PC-9 (cell line): ENCODE measurements at regions of chr2 and their contacts with region 1.

Region 1: GRCh38 chr2:213238753-213239495 is 45.3 kb upstream of the SPAG16 start:
- DNase-seq: peak; percentile 56 to 92
- H3K4me3 ChIP-seq: peak overlapping the region; percentile 24; the same call in 1 of the 2 replicates
- H3K27ac ChIP-seq: peak overlapping the region; percentile 90
- H3K4me1 ChIP-seq: peaks cover 30% of the 10 kb centered on the region
- H3K27me3 ChIP-seq: no peaks in the 10 kb centered on the region
- CTCF ChIP-seq: no peak

Region 2: GRCh38 chr2:212686285-212686895 is 552.5 kb before region 1 on chr2:
- CTCF ChIA-PET with region 1: no interaction called
- POLR2A ChIA-PET with region 1: no interaction called
- intact Hi-C with region 1: loop called (anchors 5 kb)
- DNase-seq: peak; percentile 35 to 41
- H3K4me3 ChIP-seq: no peak overlapping the region
- H3K27ac ChIP-seq: no peak overlapping the region
- H3K4me1 ChIP-seq: 0 out of 2 replicates have a peak, but pooled peaks cover 6% of the 10 kb centered on the region
- H3K27me3 ChIP-seq: no peaks in the 10 kb centered on the region
- CTCF ChIP-seq: peak; percentile 85

Region 3: DNA sequence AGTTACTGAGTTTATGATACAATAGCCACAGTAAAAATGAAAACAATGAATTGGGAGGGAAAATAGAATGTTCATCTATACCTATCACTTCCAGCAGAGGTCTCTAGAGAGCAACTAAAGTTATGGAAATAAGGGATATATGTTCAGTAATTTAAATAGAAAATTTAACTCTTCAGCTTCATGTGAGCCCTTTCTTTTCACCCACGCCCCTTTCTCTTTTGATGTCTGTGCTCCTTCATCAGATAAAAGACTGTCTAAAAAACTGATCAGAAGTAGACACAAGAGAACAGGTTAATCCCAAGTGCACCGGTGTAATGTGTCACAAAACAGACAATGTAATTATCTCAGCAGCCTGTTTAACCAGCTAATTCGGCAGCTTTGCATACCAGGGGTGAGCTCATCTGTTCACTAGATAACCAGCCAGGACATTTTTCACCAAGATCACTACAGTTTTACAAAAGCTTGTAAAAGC is 461.9 kb before region 1 on chr2:
- CTCF ChIA-PET with region 1: no interaction called
- POLR2A ChIA-PET with region 1: no interaction called
- intact Hi-C with region 1: loop called (anchors 2 kb)
- DNase-seq: peak; percentile 15 to 52
- H3K4me3 ChIP-seq: no peak overlapping the region
- H3K27ac ChIP-seq: no peak overlapping the region
- H3K4me1 ChIP-seq: no peaks in the 10 kb centered on the region; the same call in 1 of the 2 replicates
- H3K27me3 ChIP-seq: no peaks in the 10 kb centered on the region
- CTCF ChIP-seq: peak; percentile 73

Region 4: GRCh38 chr2:212863185-212863588 is 375.7 kb before region 1 on chr2:
- CTCF ChIA-PET with region 1: no interaction called
- POLR2A ChIA-PET with region 1: no interaction called
- intact Hi-C with region 1: loop called (anchors 5 kb)
- DNase-seq: peak; percentile 32 to 48
- H3K4me3 ChIP-seq: no peak overlapping the region
- H3K27ac ChIP-seq: no peak overlapping the region
- H3K4me1 ChIP-seq: no peaks in the 10 kb centered on the region
- H3K27me3 ChIP-seq: no peaks in the 10 kb centered on the region
- CTCF ChIP-seq: peak; percentile 69

Region 5: DNA sequence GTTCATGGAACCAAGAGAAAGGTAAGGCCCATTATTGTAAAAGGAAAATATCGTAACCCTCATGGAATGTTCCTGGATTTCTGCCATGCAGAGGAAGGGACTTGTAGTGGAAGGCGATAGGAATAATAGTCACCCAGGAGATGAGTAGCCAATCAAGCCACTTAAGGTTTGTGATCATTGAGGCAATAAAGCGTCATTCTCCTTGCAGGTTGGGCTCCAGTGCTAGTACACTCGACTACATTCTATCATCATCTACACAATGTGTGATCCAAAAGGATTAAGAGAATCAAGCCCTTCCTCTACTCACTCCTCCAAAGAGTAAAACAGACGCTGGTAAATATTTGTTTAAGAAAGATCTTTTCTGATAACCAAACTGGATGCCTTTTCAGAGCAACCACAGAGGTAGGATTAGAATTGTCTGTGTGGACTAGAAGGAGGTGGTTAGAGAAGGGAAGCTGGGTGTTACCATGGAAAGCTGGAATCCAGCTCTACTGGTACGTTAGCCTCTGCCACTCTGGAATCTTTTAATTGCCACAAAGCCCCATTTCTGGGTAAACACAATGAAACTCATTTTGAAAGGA is 333.2 kb before region 1 on chr2:
- CTCF ChIA-PET with region 1: no interaction called
- POLR2A ChIA-PET with region 1: no interaction called
- intact Hi-C with region 1: loop called (anchors 1 kb)
- DNase-seq: peak; percentile 54 to 96
- H3K4me3 ChIP-seq: peak overlapping the region; percentile 44; the same call in 1 of the 2 replicates
- H3K27ac ChIP-seq: peak overlapping the region; percentile 99
- H3K4me1 ChIP-seq: peaks cover 71% of the 10 kb centered on the region
- H3K27me3 ChIP-seq: no peaks in the 10 kb centered on the region
- CTCF ChIP-seq: no peak

Region 6: DNA sequence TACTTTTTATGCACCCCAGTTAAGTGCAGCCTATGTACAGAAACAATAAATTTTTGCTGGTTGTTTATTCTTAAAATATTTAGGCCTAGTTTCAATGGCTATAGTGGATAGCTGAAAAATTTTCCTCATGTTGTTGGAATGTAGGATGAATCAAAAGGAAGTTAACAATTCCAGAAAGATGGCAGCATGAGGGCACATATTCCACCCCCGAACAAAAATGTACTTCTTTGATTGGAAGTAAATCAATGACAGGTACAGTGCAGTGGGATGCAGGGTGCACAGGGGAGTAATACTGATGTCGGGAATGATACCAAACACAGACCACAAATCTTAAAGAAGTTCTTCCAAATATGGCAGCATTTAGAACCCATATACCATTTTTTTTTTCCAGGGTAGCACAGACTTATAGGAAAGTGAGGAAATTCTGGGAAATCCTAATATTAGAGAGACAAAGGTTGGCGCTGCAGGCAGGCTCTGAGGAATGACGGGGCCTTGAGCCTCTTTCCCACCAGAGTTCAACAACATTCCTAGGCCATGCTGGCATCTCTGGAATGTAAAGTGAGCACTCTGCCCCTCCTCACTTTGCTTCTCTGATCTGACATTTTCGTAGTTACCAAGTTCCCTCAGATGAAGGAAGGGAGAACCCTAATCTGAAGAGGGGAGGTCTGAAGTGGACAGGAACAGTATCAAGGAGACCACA is 50.9 kb before region 1 on chr2:
- CTCF ChIA-PET with region 1: no interaction called
- POLR2A ChIA-PET with region 1: no interaction called
- intact Hi-C with region 1: loop called (anchors 1 kb)
- DNase-seq: peak; percentile 58 to 60
- H3K4me3 ChIP-seq: no peak overlapping the region
- H3K27ac ChIP-seq: no peak overlapping the region
- H3K4me1 ChIP-seq: 0 out of 2 replicates have a peak, but pooled peaks cover 7% of the 10 kb centered on the region
- H3K27me3 ChIP-seq: no peaks in the 10 kb centered on the region
- CTCF ChIP-seq: no peak

Region 7: GRCh38 chr2:213216461-213216860 is 22.5 kb before region 1 on chr2:
- CTCF ChIA-PET with region 1: no interaction called
- POLR2A ChIA-PET with region 1: no interaction called
- intact Hi-C with region 1: loop called (anchors 1 kb)
- DNase-seq: peak; percentile 9 to 84
- H3K4me3 ChIP-seq: peak overlapping the region; percentile 17; the same call in 1 of the 2 replicates
- H3K27ac ChIP-seq: peak overlapping the region; percentile 58
- H3K4me1 ChIP-seq: peaks cover 14% of the 10 kb centered on the region
- H3K27me3 ChIP-seq: no peaks in the 10 kb centered on the region
- CTCF ChIP-seq: no peak